IMR-90 (cell line): ENCODE measurements at regions of chr3 and their contacts with region 1.

Region 1: DNA sequence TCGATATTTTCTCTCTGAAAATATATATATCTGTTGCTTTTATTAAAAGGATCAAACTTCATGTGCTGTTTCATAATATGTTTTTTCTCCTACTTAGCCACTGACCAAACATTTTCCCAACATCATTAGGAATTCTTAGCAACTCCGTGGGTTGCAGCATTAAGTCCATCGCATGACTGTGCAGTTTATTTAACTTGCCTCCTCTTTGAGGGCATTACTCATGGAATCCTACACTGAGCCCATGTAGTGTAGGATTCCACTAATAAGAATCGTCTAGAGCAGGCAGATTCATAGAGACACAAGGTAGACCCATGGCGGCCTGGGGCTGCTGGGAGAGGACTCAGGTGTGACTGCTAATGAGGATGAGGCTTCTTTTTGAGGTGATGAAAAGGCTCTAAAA is 49.3 kb downstream of the CMTM6 start:
- DNase-seq: peak; percentile 95
- ATAC-seq: peak; percentile 98
- H3K4me3 ChIP-seq: no peak overlapping the region
- H3K27ac ChIP-seq: peak overlapping the region; percentile 45; the same call in 1 of the 2 replicates
- H3K4me1 ChIP-seq: peaks cover 10% of the 10 kb centered on the region
- H3K27me3 ChIP-seq: no peaks in the 10 kb centered on the region
- CTCF ChIP-seq: no peak
- POLR2A ChIP-seq: no peak
- RAD21 ChIP-seq: no peak

Region 2: GRCh38 chr3:32313723-32314473 is 139.4 kb before region 1 on chr3:
- CTCF ChIA-PET with region 1: no interaction called
- POLR2A ChIA-PET with region 1: interaction called, 11 read pairs
- dilution Hi-C with region 1: no loop called
- in situ Hi-C with region 1: no loop called
- intact Hi-C with region 1: no loop called
- DNase-seq: peak; percentile 3
- ATAC-seq: no peak
- H3K4me3 ChIP-seq: no peak overlapping the region
- H3K27ac ChIP-seq: no peak overlapping the region
- H3K4me1 ChIP-seq: no peaks in the 10 kb centered on the region
- H3K27me3 ChIP-seq: peaks cover 14% of the 10 kb centered on the region
- CTCF ChIP-seq: no peak
- POLR2A ChIP-seq: no peak
- RAD21 ChIP-seq: no peak

Region 3: DNA sequence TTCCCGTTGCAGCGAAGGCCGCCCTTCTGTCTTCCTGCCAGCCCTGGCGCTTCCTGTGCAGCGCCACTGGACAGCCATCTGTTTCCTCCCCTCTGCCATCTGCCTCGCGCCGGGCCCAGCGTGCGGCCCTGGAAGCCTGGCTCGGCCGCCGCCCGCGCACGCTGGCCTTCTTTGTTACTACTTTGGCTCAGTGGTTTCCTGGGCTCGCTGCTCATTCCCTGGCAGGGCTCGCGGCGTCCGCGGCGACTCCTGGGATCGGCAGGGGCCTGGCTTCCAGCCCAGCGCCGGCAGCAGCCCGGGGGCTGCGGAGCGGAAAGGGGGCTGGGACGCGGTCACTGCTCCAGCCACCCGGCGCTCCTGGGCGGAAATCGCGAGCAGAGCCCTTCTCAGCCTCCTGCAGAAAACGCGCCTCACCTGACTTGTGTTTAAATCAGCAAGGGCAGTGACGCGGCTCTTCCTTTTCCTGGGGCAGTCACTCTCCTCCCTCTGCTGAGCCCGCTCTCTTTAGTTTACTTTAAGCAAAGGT is 51.7 kb before region 1 on chr3:
- CTCF ChIA-PET with region 1: no interaction called
- POLR2A ChIA-PET with region 1: no interaction called
- dilution Hi-C with region 1: no loop called
- in situ Hi-C with region 1: no loop called
- intact Hi-C with region 1: loop called (anchors 5 kb)
- DNase-seq: peak; percentile 70
- ATAC-seq: peak; percentile 87
- H3K4me3 ChIP-seq: peak overlapping the region; percentile 38
- H3K27ac ChIP-seq: peak overlapping the region; percentile 66
- H3K4me1 ChIP-seq: peaks cover 5% of the 10 kb centered on the region
- H3K27me3 ChIP-seq: no peaks in the 10 kb centered on the region
- CTCF ChIP-seq: no peak
- POLR2A ChIP-seq: no peak
- RAD21 ChIP-seq: no peak; the same call in 1 of the 2 replicates